ENCODE measurements at regions of chr7 and their contacts with region 1.

Region 1: DNA sequence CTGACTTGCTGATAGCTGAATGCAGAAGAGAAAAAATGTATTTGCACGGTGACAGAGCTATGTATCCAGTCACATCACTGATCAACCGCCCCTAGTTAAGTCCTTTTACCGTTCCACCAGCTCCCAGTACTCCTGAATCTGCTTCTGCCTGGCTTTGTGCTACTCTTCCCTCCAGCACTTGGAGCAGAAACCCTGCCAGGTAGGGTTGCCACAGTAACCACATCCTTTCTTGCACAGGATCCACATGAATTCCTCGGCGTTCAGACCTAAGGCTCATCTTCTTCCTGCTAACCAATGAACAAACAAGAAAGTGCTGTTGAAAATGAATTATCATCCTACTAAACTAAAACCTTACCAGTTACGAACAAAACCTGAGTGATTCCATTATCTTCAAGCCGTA is 52.0 kb upstream of the KCTD7 start:
- DNase-seq: peak; percentile 39
- H3K4me3 ChIP-seq: no peak overlapping the region
- H3K27ac ChIP-seq: no peak overlapping the region
- H3K4me1 ChIP-seq: no peaks in the 10 kb centered on the region
- H3K27me3 ChIP-seq: no peaks in the 10 kb centered on the region
- CTCF ChIP-seq: no peak

Region 2: GRCh38 chr7:66522518-66522917 is 54.1 kb before region 1 on chr7:
- CTCF ChIA-PET with region 1: no interaction called
- dilution Hi-C with region 1: loop called (anchors 5 kb)
- in situ Hi-C with region 1: no loop called
- intact Hi-C with region 1: no loop called
- DNase-seq: no peak
- H3K4me3 ChIP-seq: no peak overlapping the region
- H3K27ac ChIP-seq: no peak overlapping the region
- H3K4me1 ChIP-seq: no peaks in the 10 kb centered on the region
- H3K27me3 ChIP-seq: no peaks in the 10 kb centered on the region
- CTCF ChIP-seq: peak in 1 of 2 donors; percentile 44